CD4-positive, alpha-beta memory T cell (primary cell): ENCODE measurements at regions of chr16 and their contacts with region 1.

Region 1: GRCh38 chr16:28218104-28218503 is 6.3 kb upstream of the XPO6 start:
- DNase-seq: peak; percentile 67 to 81 (median 77)
- H3K4me3 ChIP-seq: no peak overlapping the region
- H3K4me3 Mint-ChIP-seq: no peak overlapping the region
- H3K27ac ChIP-seq: no peak overlapping the region
- H3K27ac Mint-ChIP-seq: peak overlapping the region; percentile 47 to 90 (median 63)
- H3K4me1 ChIP-seq: no peaks in the 10 kb centered on the region
- H3K4me1 Mint-ChIP-seq: peaks cover 2 to 7% (median 5%) of the 10 kb centered on the region in 4 donors
- H3K27me3 ChIP-seq: no peaks in the 10 kb centered on the region
- H3K27me3 Mint-ChIP-seq: no peaks in the 10 kb centered on the region

Region 2: GRCh38 chr16:27972500-27972899 is 245.6 kb before region 1 on chr16:
- CTCF ChIA-PET with region 1: interaction called, 29 read pairs
- POLR2A ChIA-PET with region 1: interaction called, 3 read pairs
- intact Hi-C with region 1: no loop called
- DNase-seq: peak; percentile 39 to 55 (median 43)
- H3K4me3 ChIP-seq: no peak overlapping the region
- H3K4me3 Mint-ChIP-seq: peak overlapping the region in 1 of 8 donors; percentile 26
- H3K27ac ChIP-seq: no peak overlapping the region
- H3K27ac Mint-ChIP-seq: peak overlapping the region in 1 of 7 donors; percentile 66
- H3K4me1 ChIP-seq: no peaks in the 10 kb centered on the region
- H3K4me1 Mint-ChIP-seq: peaks cover 0 to 5% (median 2%) of the 10 kb centered on the region in 4 donors
- H3K27me3 ChIP-seq: no peaks in the 10 kb centered on the region
- H3K27me3 Mint-ChIP-seq: peaks cover 10 to 15% of the 10 kb centered on the region in 2 donors

Region 3: GRCh38 chr16:28140788-28141618 is 77.1 kb before region 1 on chr16:
- CTCF ChIA-PET with region 1: interaction called, 569 read pairs
- POLR2A ChIA-PET with region 1: interaction called, 301 read pairs
- intact Hi-C with region 1: loop called (anchors 1 kb)
- DNase-seq: peak; percentile 87 to 96 (median 93)
- H3K4me3 ChIP-seq: peak overlapping the region; percentile 19 to 44
- H3K4me3 Mint-ChIP-seq: peak overlapping the region; percentile 76 to 94 (median 86)
- H3K27ac ChIP-seq: peak overlapping the region; percentile 69
- H3K27ac Mint-ChIP-seq: peak overlapping the region; percentile 89 to 100 (median 99)
- H3K4me1 ChIP-seq: peaks cover 97% of the 10 kb centered on the region
- H3K4me1 Mint-ChIP-seq: peaks cover 68 to 92% (median 81%) of the 10 kb centered on the region in 4 donors
- H3K27me3 ChIP-seq: no peaks in the 10 kb centered on the region
- H3K27me3 Mint-ChIP-seq: no peaks in the 10 kb centered on the region

Region 4: DNA sequence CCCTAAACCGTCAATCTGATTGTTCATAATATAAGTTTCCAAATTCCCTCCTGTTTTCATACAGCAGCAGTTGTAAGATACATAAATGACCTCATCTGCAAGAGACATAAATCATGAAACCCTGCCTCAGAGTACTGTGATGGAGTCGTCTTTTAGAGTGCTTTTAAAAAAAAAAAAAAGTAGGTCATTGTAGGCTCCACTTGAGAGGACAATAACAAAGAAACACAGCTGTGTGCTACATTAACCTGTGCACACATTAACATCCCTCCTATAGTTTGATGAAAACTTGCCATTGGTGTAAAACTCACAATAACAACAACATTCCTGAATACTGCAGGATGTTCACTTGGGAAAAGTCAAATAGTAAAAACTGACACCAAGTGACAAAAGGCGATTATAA is 62.8 kb before region 1 on chr16:
- CTCF ChIA-PET with region 1: interaction called, 51 read pairs
- POLR2A ChIA-PET with region 1: interaction called, 3 read pairs
- intact Hi-C with region 1: no loop called
- DNase-seq: no peak
- H3K4me3 ChIP-seq: no peak overlapping the region
- H3K4me3 Mint-ChIP-seq: peak overlapping the region in 2 of 8 donors; percentile 53 to 63
- H3K27ac ChIP-seq: no peak overlapping the region
- H3K27ac Mint-ChIP-seq: peak overlapping the region; percentile 42 to 90 (median 82)
- H3K4me1 ChIP-seq: peaks cover 37% of the 10 kb centered on the region
- H3K4me1 Mint-ChIP-seq: peaks cover 44 to 65% (median 55%) of the 10 kb centered on the region in 4 donors
- H3K27me3 ChIP-seq: no peaks in the 10 kb centered on the region
- H3K27me3 Mint-ChIP-seq: no peaks in the 10 kb centered on the region

Region 5: DNA sequence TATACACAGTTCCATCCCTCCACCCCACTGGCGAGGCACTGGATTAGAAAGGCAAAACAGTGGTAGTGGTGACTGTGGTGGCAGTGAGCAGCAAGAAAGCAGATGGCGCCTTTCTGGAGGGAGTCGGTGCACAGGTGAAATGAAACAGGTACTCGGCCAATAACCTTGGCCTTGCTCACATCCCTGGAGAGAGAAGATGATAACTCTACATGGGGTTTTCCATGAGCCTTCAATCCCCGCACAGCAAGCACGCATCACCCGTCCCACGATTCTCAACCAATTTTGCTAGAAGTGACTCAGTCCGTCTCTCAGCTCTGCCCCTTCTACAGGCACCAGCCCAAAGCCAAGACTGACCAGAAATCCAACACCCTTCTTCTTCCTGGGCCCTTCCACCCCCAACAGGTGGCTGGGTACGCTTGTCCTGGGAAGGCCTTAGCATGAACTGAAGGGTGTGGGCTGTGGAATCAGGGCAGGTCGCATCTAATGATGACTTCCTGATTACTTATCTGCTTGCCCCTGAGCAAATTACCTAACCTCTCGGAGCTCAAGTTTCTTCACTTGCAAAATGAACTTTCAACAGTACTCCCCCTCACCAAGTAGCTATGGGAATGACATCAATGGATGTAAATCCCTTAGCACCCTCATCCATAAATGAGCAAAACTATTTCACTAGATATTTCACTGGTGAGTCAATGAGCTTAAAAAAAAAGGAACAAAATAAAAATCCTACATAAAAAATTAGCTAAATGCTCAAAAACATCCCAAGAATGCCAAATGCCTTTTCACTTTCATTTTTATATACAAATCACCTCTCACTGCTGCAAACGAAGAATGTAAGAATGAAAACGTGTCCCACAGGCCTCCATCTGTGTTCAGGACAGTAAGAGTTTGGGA is 24.3 kb before region 1 on chr16:
- CTCF ChIA-PET with region 1: interaction called, 37 read pairs
- POLR2A ChIA-PET with region 1: interaction called, 229 read pairs
- intact Hi-C with region 1: no loop called
- DNase-seq: peak in 2 of 5 donors; percentile 42 to 80
- H3K4me3 ChIP-seq: peak overlapping the region; percentile 18 to 53
- H3K4me3 Mint-ChIP-seq: peak overlapping the region; percentile 76 to 91 (median 84)
- H3K27ac ChIP-seq: peak overlapping the region; percentile 88
- H3K27ac Mint-ChIP-seq: peak overlapping the region; percentile 94 to 99 (median 98)
- H3K4me1 ChIP-seq: peaks cover 87% of the 10 kb centered on the region
- H3K4me1 Mint-ChIP-seq: peaks cover 62 to 85% (median 75%) of the 10 kb centered on the region in 4 donors
- H3K27me3 ChIP-seq: no peaks in the 10 kb centered on the region
- H3K27me3 Mint-ChIP-seq: no peaks in the 10 kb centered on the region